AG04450 (cell line): ENCODE measurements at regions of chr22 and their contacts with region 1.

Region 1: GRCh38 chr22:32796865-32797573 is 4.5 kb upstream of the TIMP3 start:
- DNase-seq: peak; percentile 63
- H3K4me3 ChIP-seq: 0 out of 2 replicates have a peak overlapping the region, but pooled peaks have one; percentile 18
- H3K27ac ChIP-seq: peak overlapping the region; percentile 13
- H3K27me3 ChIP-seq: no peaks in the 10 kb centered on the region
- CTCF ChIP-seq: peak; percentile 93

Region 2: GRCh38 chr22:32542677-32543357 is 254.2 kb before region 1 on chr22:
- CTCF ChIA-PET with region 1: interaction called, 12 read pairs
- POLR2A ChIA-PET with region 1: interaction called, 3 read pairs
- DNase-seq: no peak
- H3K4me3 ChIP-seq: no peak overlapping the region
- H3K27ac ChIP-seq: peak overlapping the region; percentile 2
- H3K27me3 ChIP-seq: peaks cover 3% of the 10 kb centered on the region
- CTCF ChIP-seq: no peak

Region 3: GRCh38 chr22:32649515-32650200 is 147.4 kb before region 1 on chr22:
- CTCF ChIA-PET with region 1: interaction called, 29 read pairs
- POLR2A ChIA-PET with region 1: interaction called, 5 read pairs
- DNase-seq: no peak
- H3K4me3 ChIP-seq: no peak overlapping the region
- H3K27ac ChIP-seq: peak overlapping the region; percentile 87
- H3K27me3 ChIP-seq: no peaks in the 10 kb centered on the region
- CTCF ChIP-seq: no peak

Region 4: GRCh38 chr22:32717337-32718240 is 79.4 kb before region 1 on chr22:
- CTCF ChIA-PET with region 1: interaction called, 16 read pairs
- POLR2A ChIA-PET with region 1: interaction called, 7 read pairs
- DNase-seq: peak; percentile 70
- H3K4me3 ChIP-seq: no peak overlapping the region
- H3K27ac ChIP-seq: peak overlapping the region; percentile 84
- H3K27me3 ChIP-seq: no peaks in the 10 kb centered on the region
- CTCF ChIP-seq: no peak

Region 5: DNA sequence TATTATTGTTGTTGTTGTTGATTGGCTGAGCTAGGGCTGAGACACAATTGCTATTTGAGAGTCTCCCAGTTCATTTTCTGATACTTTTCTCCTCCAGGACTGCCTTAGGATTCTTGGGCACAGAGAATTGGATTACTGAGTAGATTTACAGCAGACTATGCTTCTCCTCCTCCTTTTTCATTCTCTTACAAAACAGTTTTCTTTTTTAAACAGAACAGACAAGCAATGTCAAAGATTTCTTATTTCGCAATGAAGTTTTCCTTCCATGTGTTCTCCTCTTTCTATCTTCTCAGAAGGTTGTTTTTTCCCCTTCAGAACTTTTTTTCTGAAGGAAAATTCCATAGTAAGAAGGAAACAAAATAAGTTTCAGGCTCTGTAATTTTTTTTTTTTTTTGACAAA is 15.3 kb before region 1 on chr22:
- CTCF ChIA-PET with region 1: interaction called, 41 read pairs
- POLR2A ChIA-PET with region 1: interaction called, 4 read pairs
- DNase-seq: no peak
- H3K4me3 ChIP-seq: no peak overlapping the region
- H3K27ac ChIP-seq: no peak overlapping the region
- H3K27me3 ChIP-seq: no peaks in the 10 kb centered on the region
- CTCF ChIP-seq: no peak

Region 6: DNA sequence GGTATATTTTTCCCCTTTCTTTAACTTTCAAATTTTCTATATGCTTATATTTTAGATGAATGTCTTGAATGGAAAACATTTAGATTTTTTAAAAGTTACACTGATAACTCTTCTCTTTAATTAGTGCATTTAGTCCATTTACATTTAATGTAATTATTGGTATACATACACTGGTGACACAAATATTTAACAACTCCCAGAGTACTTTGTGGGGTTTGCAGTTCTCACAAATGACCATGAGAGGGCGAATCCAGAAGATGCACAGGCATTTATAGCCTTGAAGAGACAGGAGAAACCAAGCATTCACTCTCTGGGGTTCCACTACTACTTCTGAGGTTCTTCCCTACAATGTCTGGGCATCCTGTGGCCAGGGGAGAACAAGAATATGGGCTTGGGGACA is 129.6 kb after region 1 on chr22:
- CTCF ChIA-PET with region 1: no interaction called
- POLR2A ChIA-PET with region 1: no interaction called
- DNase-seq: peak; percentile 6
- H3K4me3 ChIP-seq: no peak overlapping the region
- H3K27ac ChIP-seq: no peak overlapping the region
- H3K27me3 ChIP-seq: peaks cover 4% of the 10 kb centered on the region
- CTCF ChIP-seq: peak; percentile 72

Region 7: GRCh38 chr22:33000342-33001280 is 203.6 kb after region 1 on chr22:
- CTCF ChIA-PET with region 1: interaction called, 10 read pairs
- POLR2A ChIA-PET with region 1: no interaction called
- DNase-seq: no peak
- H3K4me3 ChIP-seq: no peak overlapping the region
- H3K27ac ChIP-seq: no peak overlapping the region
- H3K27me3 ChIP-seq: peaks cover 13% of the 10 kb centered on the region
- CTCF ChIP-seq: peak; percentile 91